B cell (primary cell): ENCODE measurements at regions of chr2 and their contacts with region 1.

Region 1: DNA sequence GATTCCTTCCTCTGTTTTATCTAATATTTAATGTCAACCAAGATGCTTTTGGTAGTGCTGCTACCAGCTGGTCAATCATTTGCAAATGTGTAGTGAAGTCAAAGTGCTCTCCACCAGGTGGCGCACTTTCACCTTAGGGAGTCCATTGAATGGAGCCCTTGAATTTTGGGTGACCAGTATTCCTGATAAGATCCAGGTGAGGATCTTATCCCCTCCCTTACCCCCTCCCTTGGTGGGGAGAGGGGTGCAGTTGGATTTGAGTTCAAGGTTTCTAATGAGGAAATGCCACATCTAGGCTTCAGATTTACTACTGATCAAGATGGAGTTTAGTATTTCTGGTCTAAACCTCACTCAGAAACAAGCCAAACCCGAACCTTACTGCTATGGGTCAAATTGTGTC is 12.0 kb upstream of the E2F6 start:
- DNase-seq: peak; percentile 82
- ATAC-seq: peak; percentile 54
- H3K4me3 ChIP-seq: no peak overlapping the region
- H3K4me3 Mint-ChIP-seq: no peak overlapping the region
- H3K27ac ChIP-seq: no peak overlapping the region
- H3K27ac Mint-ChIP-seq: no peak overlapping the region
- H3K4me1 ChIP-seq: peaks cover 2 to 10% of the 10 kb centered on the region in 2 donors
- H3K4me1 Mint-ChIP-seq: peaks cover 3% of the 10 kb centered on the region
- H3K27me3 ChIP-seq: peaks cover 0 to 31% (median 5%) of the 10 kb centered on the region in 4 experiments
- H3K27me3 Mint-ChIP-seq: peaks cover 27% of the 10 kb centered on the region
- CTCF ChIP-seq: peak; percentile 97

Region 2: GRCh38 chr2:11450791-11451190 is 27.2 kb before region 1 on chr2:
- CTCF ChIA-PET with region 1: no interaction called
- POLR2A ChIA-PET with region 1: no interaction called
- intact Hi-C with region 1: no loop called
- DNase-seq: no peak
- ATAC-seq: no peak
- H3K4me3 ChIP-seq: no peak overlapping the region
- H3K4me3 Mint-ChIP-seq: no peak overlapping the region
- H3K27ac ChIP-seq: no peak overlapping the region
- H3K27ac Mint-ChIP-seq: no peak overlapping the region
- H3K4me1 ChIP-seq: no peaks in the 10 kb centered on the region
- H3K4me1 Mint-ChIP-seq: peaks cover 2% of the 10 kb centered on the region
- H3K27me3 ChIP-seq: no peaks in the 10 kb centered on the region
- H3K27me3 Mint-ChIP-seq: no peaks in the 10 kb centered on the region
- CTCF ChIP-seq: no peak

Region 3: GRCh38 chr2:11465497-11466406 is 12.2 kb before region 1 on chr2 and contains the start of gene E2F6:
- CTCF ChIA-PET with region 1: interaction called, 37 read pairs
- POLR2A ChIA-PET with region 1: no interaction called
- intact Hi-C with region 1: no loop called
- DNase-seq: peak; percentile 88
- ATAC-seq: peak; percentile 73
- H3K4me3 ChIP-seq: peak within 1 kb of the TSS; percentile 66 to 97 (median 92)
- H3K4me3 Mint-ChIP-seq: peak within 1 kb of the TSS; percentile 97
- H3K27ac ChIP-seq: peak within 1 kb of the TSS; percentile 1 to 79
- H3K27ac Mint-ChIP-seq: peak within 1 kb of the TSS; percentile 94
- H3K4me1 ChIP-seq: peaks cover 7 to 13% of the 10 kb centered on the region in 2 donors
- H3K4me1 Mint-ChIP-seq: peaks cover 23% of the 10 kb centered on the region
- H3K27me3 ChIP-seq: no peaks in the 10 kb centered on the region
- H3K27me3 Mint-ChIP-seq: no peaks in the 10 kb centered on the region
- CTCF ChIP-seq: no peak
- total RNA-seq, gene E2F6: 10.0 and 10.1 TPM in 2 replicates

Region 4: DNA sequence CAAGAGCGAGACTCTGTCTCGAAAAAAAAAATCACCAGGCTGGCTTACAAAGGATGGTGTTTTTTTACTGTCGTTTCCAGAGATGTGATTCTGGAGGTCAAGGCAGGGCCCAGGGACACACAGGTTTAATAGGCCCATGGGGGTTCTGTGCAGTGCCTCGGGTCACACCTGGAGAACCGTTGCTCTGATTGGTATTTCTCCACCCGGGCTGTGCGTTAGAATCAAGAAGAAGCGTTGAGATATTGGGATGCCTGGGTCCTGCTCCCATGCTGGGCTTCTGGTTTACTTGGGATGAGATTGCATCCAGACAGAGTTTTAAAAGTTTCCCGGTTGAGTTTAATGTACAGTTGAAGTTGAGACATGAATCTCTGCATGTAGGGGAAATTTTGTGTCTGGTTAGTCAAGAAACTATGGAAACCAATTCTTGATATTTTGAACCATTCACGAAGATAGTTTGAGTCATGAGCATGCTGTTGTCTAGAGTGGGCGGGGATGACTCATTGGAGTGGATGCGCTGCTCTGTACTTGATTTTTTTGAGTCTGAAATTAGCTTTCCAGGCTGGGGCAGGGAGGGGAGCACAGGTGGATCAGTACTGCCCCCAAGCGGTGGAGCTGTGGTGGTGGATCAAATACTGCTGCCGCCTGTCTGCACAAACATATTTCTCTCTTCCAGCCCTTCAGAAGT is 106.0 kb after region 1 on chr2:
- CTCF ChIA-PET with region 1: interaction called, 7 read pairs
- POLR2A ChIA-PET with region 1: no interaction called
- intact Hi-C with region 1: loop called (anchors 1 kb)
- DNase-seq: peak; percentile 49
- ATAC-seq: peak; percentile 49
- H3K4me3 ChIP-seq: no peak overlapping the region
- H3K4me3 Mint-ChIP-seq: no peak overlapping the region
- H3K27ac ChIP-seq: no peak overlapping the region
- H3K27ac Mint-ChIP-seq: no peak overlapping the region
- H3K4me1 ChIP-seq: no peaks in the 10 kb centered on the region
- H3K4me1 Mint-ChIP-seq: no peaks in the 10 kb centered on the region
- H3K27me3 ChIP-seq: peaks cover 0 to 12% (median 3%) of the 10 kb centered on the region in 4 experiments
- H3K27me3 Mint-ChIP-seq: peaks cover 16% of the 10 kb centered on the region
- CTCF ChIP-seq: peak; percentile 68

Region 5: DNA sequence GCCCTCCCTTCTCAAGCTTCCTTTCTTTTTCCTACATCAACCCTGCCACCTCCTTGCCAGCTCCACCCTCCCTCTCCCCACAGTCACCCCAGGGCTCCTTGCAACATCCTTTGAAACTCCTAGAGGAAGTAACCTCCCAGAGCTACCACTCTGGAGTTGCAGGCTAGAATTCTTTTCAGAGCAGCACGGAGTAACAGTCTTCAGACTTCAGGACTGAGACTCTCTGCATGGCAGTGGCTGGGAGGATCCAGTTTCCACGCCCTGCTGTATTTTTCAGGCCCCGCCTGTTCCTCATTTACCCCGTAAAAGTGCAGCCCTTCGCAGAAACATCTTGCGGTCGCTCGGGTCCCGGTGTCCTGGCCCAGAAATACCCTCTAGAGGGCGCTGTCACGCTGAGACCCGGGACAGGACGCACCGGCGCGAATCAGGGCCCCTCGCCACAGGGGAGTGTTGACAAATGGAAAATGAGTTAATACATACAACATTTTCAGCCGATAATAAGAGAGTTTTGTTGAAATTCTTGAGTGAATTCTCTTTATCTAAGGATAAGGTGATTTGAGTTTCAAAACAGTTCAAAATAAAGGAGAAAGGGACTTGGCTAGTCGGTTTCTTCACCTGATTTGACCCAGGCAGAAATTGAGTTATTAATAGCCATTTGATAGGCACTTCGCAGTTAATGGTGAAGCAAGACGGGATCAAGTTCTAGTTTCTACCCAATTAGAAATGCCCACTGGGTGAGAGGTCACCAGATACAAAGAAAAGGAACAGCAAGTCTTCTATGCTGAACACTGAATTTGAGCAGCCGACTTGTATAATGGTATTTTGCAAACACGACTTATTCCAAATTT is 210.5 kb after region 1 on chr2:
- CTCF ChIA-PET with region 1: interaction called, 3 read pairs
- POLR2A ChIA-PET with region 1: no interaction called
- intact Hi-C with region 1: loop called (anchors 5 kb)
- DNase-seq: peak; percentile 89
- ATAC-seq: peak; percentile 83
- H3K4me3 ChIP-seq: peak overlapping the region in 1 of 5 experiments; percentile 17
- H3K4me3 Mint-ChIP-seq: peak overlapping the region; percentile 67
- H3K27ac ChIP-seq: no peak overlapping the region
- H3K27ac Mint-ChIP-seq: no peak overlapping the region
- H3K4me1 ChIP-seq: peaks cover 11 to 16% of the 10 kb centered on the region in 2 donors
- H3K4me1 Mint-ChIP-seq: peaks cover 8% of the 10 kb centered on the region
- H3K27me3 ChIP-seq: peaks cover 0 to 4% (median 0%) of the 10 kb centered on the region in 4 experiments
- H3K27me3 Mint-ChIP-seq: peaks cover 25% of the 10 kb centered on the region
- CTCF ChIP-seq: peak; percentile 85

Region 6: GRCh38 chr2:12087671-12088381 is 609.8 kb after region 1 on chr2:
- CTCF ChIA-PET with region 1: no interaction called
- POLR2A ChIA-PET with region 1: no interaction called
- intact Hi-C with region 1: no loop called
- DNase-seq: no peak
- ATAC-seq: no peak
- H3K4me3 ChIP-seq: no peak overlapping the region
- H3K4me3 Mint-ChIP-seq: no peak overlapping the region
- H3K27ac ChIP-seq: no peak overlapping the region
- H3K27ac Mint-ChIP-seq: no peak overlapping the region
- H3K4me1 ChIP-seq: peaks cover 9 to 10% of the 10 kb centered on the region in 2 donors
- H3K4me1 Mint-ChIP-seq: peaks cover 18% of the 10 kb centered on the region
- H3K27me3 ChIP-seq: no peaks in the 10 kb centered on the region
- H3K27me3 Mint-ChIP-seq: no peaks in the 10 kb centered on the region
- CTCF ChIP-seq: no peak